Thyroid gland (tissue), 4 donors: ENCODE measurements at regions of chr20 and their contacts with region 1.

Region 1: DNA sequence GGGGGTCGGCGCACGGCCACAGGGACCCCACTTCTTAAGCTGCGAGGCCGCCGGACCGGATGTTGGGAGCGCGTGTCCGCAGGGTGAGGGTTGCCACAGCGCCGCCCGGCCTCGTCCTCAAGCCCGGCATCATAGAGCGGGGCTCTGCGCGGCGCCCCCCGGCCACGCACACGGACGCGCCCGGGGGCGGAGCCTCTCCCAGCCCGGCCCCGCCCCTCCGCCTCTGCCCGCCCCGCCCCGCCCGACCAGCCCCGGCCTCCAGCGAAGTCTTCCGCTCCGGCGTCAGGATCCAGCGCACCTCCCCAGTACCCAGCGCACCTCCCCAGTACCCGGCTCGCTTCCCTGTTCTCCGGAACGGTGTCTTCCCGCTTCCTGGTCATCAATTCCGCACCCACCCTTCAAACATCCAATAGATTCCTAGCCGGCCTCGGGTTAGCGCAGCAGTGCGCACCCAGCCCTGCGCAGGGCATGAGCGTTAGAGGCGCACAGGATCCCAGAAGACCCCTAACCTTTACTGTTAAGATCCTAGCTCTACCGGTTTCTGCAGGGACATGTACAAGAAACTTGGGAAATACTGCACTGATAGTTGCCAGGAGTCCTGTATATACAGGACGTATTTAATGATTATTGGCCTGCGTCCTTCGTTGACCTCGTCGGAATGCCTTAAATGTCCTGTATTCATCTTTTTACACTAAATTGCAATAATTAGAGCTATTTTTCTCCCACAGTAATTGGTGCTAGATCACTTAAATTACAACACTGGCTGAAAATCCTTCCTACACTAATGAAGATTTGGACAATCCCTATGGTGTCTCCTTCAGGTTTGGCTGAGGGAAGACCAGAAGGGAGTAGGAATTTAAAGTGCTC is 535 bp upstream of the DNAAF9 start:
- DNase-seq: peak; percentile 75 to 76
- H3K4me3 ChIP-seq: peak overlapping the region; percentile 31 to 90 (median 78)
- H3K27ac ChIP-seq: peak overlapping the region; percentile 84 to 94 (median 92)
- H3K4me1 ChIP-seq: peaks cover 10 to 12% of the 10 kb centered on the region in 2 donors
- H3K27me3 ChIP-seq: no peaks in the 10 kb centered on the region
- CTCF ChIP-seq: no peak
- POLR2A ChIP-seq: peak in 1 of 2 donors; percentile 74

Region 2: DNA sequence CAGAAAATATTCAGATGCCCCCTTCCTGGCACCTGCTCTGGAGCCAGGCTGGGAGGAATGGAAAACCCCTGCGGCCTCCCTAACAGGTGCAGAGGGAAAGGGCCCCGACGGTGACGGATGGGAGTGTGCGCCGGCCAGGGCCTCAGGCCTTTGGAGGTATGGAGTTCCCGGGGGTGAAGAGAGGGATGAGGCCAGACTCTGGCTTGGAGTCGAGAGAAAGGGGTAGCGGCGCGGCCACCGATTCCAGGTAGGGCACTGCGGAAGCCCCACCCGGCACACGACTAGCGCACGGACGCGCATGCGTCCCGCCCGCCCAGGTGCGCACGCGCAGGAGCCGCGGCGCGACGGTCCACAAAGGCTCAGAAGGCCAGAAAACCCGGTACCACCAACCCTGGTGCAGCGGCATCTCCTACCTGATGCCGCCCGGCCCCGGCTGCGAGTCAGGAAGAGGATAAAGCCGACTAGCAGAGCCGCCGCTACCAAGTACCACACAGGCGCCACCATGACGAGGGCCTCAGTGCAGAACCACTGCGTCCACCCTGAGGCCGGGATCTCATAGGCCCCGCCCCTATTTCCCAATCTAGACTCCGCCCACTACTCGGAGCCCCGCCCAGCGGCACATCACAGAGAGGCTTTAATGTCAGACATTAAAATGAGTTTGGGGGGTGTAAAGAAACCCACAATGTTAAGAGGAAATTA is 203.7 kb before region 1 on chr20 and contains the start of gene DDRGK1:
- intact Hi-C with region 1: loop called (anchors 10 kb)
- DNase-seq: peak; percentile 82 to 86
- H3K4me3 ChIP-seq: peak within 1 kb of the TSS; percentile 39 to 58 (median 55)
- H3K27ac ChIP-seq: peak within 1 kb of the TSS; percentile 62 to 96 (median 95)
- H3K4me1 ChIP-seq: peaks cover 8 to 21% of the 10 kb centered on the region in 2 donors
- H3K27me3 ChIP-seq: no peaks in the 10 kb centered on the region
- CTCF ChIP-seq: no peak
- POLR2A ChIP-seq: peak in 1 of 2 donors; percentile 81
- total RNA-seq, gene DDRGK1: 95.5 to 136 (median 126) TPM

Region 3: DNA sequence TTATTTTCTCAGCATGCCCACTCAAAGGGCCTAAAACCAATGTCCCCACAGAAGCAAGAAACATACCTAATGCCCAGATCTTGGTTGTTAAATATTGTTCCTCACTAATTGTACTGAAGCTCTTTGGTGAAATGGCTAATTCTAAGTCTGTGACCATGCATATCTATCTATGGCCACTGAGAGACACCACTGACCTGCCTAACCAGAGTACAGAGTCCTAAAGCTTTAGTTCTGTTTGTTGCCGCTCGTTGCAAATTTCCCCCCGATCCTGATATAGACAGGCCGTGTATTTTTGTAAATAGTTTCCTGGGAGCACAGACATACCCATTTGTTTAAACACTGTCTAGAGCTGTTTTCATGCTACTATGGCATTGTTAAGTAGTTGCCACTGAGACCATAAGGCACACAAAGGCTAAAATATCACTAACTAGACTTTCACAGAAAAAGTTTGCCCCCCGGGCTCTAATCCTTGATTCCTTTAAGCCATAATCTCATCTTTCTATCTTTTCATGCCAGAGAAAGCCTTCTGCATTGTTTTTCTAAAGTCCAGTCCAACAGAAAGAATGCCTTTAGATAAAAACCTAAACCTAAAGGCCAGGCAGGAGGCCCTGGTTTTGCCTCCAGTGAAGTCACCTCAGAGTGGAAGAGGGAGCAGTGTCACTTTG is 49.2 kb before region 1 on chr20:
- intact Hi-C with region 1: no loop called
- DNase-seq: no peak
- H3K4me3 ChIP-seq: no peak overlapping the region
- H3K27ac ChIP-seq: no peak overlapping the region
- H3K4me1 ChIP-seq: no peaks in the 10 kb centered on the region
- H3K27me3 ChIP-seq: no peaks in the 10 kb centered on the region
- CTCF ChIP-seq: no peak
- POLR2A ChIP-seq: no peak